ENCODE measurements at regions of chrX and their contacts with region 1.

Region 1: GRCh38 chrX:150982788-150983520 is at the start of gene HMGB3:
- DNase-seq: peak; percentile 82
- H3K4me3 Mint-ChIP-seq: peak within 1 kb of the TSS; percentile 71
- H3K27ac Mint-ChIP-seq: peak within 1 kb of the TSS; percentile 44
- H3K4me1 Mint-ChIP-seq: peaks cover 6% of the 10 kb centered on the region
- H3K27me3 Mint-ChIP-seq: no peaks in the 10 kb centered on the region
- total RNA-seq, gene HMGB3: 29.6 and 32.3 TPM in 2 replicates

Region 2: GRCh38 chrX:149938427-149939270 is 1044.3 kb before region 1 on chrX and contains the start of gene EOLA2:
- intact Hi-C with region 1: loop called (anchors 10 kb)
- DNase-seq: peak; percentile 89
- H3K4me3 Mint-ChIP-seq: peak within 1 kb of the TSS; percentile 92
- H3K27ac Mint-ChIP-seq: peak within 1 kb of the TSS; percentile 100
- H3K4me1 Mint-ChIP-seq: peaks cover 4% of the 10 kb centered on the region
- H3K27me3 Mint-ChIP-seq: no peaks in the 10 kb centered on the region
- total RNA-seq, gene EOLA2: 54.2 and 63.3 TPM in 2 replicates

Region 3: GRCh38 chrX:150575416-150575808 is 407.5 kb before region 1 on chrX:
- intact Hi-C with region 1: loop called (anchors 5 kb)
- DNase-seq: peak; percentile 16
- H3K4me3 Mint-ChIP-seq: peak overlapping the region; percentile 76
- H3K27ac Mint-ChIP-seq: peak overlapping the region; percentile 93
- H3K4me1 Mint-ChIP-seq: peaks cover 80% of the 10 kb centered on the region
- H3K27me3 Mint-ChIP-seq: no peaks in the 10 kb centered on the region

Region 4: DNA sequence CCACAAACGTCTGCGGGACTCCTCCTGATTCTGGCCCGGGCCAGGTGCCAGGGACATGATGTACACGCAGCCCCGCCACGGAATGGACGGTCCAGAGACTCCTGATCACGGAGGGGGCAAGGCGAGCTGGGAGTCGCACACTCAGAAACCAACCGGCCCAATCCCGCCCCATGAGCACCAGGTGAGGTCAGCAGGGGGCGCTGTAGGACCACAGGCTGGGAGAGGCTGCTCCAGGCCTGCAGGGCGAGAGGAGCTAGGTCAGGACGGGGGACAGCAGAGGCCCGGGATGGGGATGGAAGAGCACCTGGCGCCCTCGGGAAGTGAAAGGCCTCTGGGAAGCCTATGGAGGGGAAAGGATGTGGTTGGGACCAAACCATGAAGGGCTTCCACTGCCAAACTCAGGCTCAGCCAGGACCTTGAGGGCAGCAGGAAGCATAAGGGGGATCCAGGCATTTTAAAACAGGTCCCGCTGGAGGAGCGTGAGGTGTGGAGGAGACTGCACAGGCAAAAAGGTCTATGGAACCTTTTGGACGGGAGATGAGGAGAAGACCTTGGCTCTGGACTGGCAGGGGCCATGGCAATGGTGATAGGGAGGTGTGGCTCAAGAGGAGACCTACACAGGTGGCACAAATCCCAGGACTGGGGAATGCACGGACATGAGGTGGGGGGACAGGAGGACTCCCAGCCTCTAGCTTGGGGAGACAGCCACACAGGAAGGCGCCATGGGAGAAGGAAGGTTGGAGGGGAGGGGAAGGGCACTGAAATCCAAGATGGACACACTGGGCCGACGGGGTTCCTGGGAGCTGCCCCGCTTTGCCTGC is 210.6 kb before region 1 on chrX:
- intact Hi-C with region 1: loop called (anchors 5 kb)
- DNase-seq: peak; percentile 47
- H3K4me3 Mint-ChIP-seq: no peak overlapping the region
- H3K27ac Mint-ChIP-seq: no peak overlapping the region
- H3K4me1 Mint-ChIP-seq: no peaks in the 10 kb centered on the region
- H3K27me3 Mint-ChIP-seq: no peaks in the 10 kb centered on the region

Region 5: DNA sequence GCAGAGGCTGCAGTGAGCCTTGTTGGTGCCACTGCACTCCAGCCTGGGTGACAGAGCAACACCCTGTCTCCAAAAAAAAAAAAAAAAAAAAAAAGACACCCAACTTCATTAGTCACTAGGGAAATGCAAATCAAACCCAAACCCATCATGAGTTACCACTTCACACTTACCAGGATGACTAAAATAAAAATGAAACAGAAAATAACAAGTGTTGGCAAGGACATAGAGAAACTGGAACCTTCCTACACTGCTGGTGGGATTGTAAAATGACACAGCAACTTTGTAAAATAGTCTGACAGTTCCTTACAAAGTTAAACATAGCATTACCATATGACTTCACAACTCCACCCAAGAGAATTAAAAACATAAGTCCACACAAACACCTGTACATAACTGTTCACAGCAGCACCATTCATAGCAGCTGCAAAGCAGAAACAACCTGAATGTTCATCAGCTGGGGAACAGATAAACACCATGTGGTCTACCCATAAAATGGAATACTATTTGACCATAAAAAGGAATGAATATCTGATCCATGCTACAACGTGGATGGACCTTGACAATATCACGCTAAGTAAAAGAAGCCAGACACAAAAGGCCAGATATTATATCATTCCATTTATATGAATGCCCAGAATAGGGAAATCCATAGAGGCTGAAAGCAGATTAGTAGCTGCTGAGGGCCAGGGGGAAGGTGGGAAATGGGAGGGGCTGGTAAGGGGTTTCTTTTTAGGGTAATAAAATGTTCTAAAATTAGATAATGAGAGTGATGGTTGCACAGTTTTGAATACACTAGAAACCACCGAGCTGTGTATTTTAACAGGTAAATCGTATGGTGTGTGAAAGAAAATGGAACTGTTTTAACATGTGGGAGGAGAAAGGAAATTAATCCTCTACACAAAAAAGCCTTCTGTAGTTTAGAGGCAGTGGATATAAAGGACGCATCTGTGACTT is 102.8 kb before region 1 on chrX:
- intact Hi-C with region 1: loop called (anchors 1 kb)
- DNase-seq: no peak
- H3K4me3 Mint-ChIP-seq: peak overlapping the region; percentile 23
- H3K27ac Mint-ChIP-seq: peak overlapping the region; percentile 81
- H3K4me1 Mint-ChIP-seq: peaks cover 25% of the 10 kb centered on the region
- H3K27me3 Mint-ChIP-seq: no peaks in the 10 kb centered on the region

Region 6: GRCh38 chrX:150967786-150968185 is 15.2 kb before region 1 on chrX:
- intact Hi-C with region 1: no loop called
- DNase-seq: no peak
- H3K4me3 Mint-ChIP-seq: no peak overlapping the region
- H3K27ac Mint-ChIP-seq: no peak overlapping the region
- H3K4me1 Mint-ChIP-seq: no peaks in the 10 kb centered on the region
- H3K27me3 Mint-ChIP-seq: peaks cover 11% of the 10 kb centered on the region

Region 7: GRCh38 chrX:151082076-151082948 is 99.4 kb after region 1 on chrX:
- intact Hi-C with region 1: loop called (anchors 1 kb)
- DNase-seq: peak; percentile 15
- H3K4me3 Mint-ChIP-seq: no peak overlapping the region
- H3K27ac Mint-ChIP-seq: no peak overlapping the region
- H3K4me1 Mint-ChIP-seq: no peaks in the 10 kb centered on the region
- H3K27me3 Mint-ChIP-seq: peaks cover 15% of the 10 kb centered on the region

Region 8: DNA sequence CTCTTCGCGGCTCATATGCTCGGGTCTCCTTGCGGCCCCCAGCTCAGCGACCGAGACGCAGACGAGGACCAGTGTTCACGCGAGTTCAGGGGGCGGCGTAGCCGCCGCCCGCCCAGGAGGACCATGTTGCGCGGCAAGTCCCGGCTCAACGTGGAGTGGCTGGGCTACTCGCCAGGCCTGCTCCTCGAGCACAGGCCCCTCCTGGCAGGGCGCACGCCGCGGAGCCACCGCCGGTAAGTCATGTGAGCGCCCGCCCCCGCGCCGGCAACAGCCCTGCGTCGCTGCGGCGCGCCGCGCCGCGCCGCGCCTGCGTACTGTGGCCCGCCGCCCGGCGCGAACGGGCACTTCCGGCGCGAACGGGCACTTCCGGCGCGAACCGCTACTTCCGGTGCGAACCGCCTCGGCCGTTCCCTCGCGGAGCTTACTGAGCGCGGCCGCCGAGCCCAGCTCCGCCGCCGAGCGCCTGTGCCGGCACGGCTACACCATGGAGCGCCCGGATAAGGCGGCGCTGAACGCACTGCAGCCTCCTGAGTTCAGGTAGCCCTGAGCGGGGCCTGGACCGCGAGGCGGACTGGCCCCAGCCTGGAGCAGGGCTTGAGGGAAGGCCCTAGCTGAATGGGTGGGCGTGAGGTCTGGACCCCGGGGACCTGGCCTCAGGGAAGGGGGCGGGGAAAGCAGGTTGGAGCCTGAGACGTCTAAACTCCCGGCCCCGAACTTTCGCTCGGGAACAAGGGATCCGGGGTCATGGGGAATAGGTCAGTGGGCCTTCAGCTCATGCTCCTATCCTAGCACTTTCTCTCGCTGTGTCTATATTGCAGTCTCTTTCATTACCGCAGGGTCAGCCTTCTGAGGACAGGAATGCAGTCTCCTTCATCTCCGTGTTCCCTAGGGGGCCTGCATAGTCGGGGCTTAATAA is 414.1 kb after region 1 on chrX and contains the start of gene VMA21:
- intact Hi-C with region 1: loop called (anchors 2 kb)
- DNase-seq: peak; percentile 79
- H3K4me3 Mint-ChIP-seq: peak within 1 kb of the TSS; percentile 93
- H3K27ac Mint-ChIP-seq: peak within 1 kb of the TSS; percentile 94
- H3K4me1 Mint-ChIP-seq: peaks cover 52% of the 10 kb centered on the region
- H3K27me3 Mint-ChIP-seq: peaks cover 3% of the 10 kb centered on the region
- total RNA-seq, gene VMA21: 39.4 and 49.2 TPM in 2 replicates

Measured in activated T-helper 1 cell treated with anti-CD3 and anti-CD28 coated beads, Interleukin-12 subunit alpha, Interleukin-12 subunit beta, Interleukin-2, Interleukin-4 antibody, amounts not matched to agents 30 ng/mL and 10 ng/mL and 1 ng/mL, durations not matched to agents 14 hours and 24 hours and 36 hours (primary cell).